B cell (primary cell): ENCODE measurements at regions of chr22 and their contacts with region 1.

Region 1: GRCh38 chr22:46762238-46763050 is at the start of gene TBC1D22A:
- DNase-seq: peak; percentile 95
- ATAC-seq: peak; percentile 70
- H3K4me3 ChIP-seq: peak within 1 kb of the TSS; percentile 51 to 96 (median 89)
- H3K4me3 Mint-ChIP-seq: peak within 1 kb of the TSS; percentile 96
- H3K27ac ChIP-seq: peak within 1 kb of the TSS; percentile 87 to 93
- H3K27ac Mint-ChIP-seq: peak within 1 kb of the TSS; percentile 99
- H3K4me1 ChIP-seq: peaks cover 48 to 62% of the 10 kb centered on the region in 2 donors
- H3K4me1 Mint-ChIP-seq: peaks cover 59% of the 10 kb centered on the region
- H3K27me3 ChIP-seq: no peaks in the 10 kb centered on the region
- H3K27me3 Mint-ChIP-seq: no peaks in the 10 kb centered on the region
- CTCF ChIP-seq: no peak
- total RNA-seq, gene TBC1D22A: 128 and 141 TPM in 2 replicates

Region 2: GRCh38 chr22:46681010-46681409 is 81.4 kb before region 1 on chr22:
- CTCF ChIA-PET with region 1: interaction called, 4 read pairs
- POLR2A ChIA-PET with region 1: no interaction called
- intact Hi-C with region 1: loop called (anchors 2 kb)
- DNase-seq: peak; percentile 50
- ATAC-seq: no peak
- H3K4me3 ChIP-seq: no peak overlapping the region
- H3K4me3 Mint-ChIP-seq: no peak overlapping the region
- H3K27ac ChIP-seq: no peak overlapping the region
- H3K27ac Mint-ChIP-seq: no peak overlapping the region
- H3K4me1 ChIP-seq: peaks cover 30 to 34% of the 10 kb centered on the region in 2 donors
- H3K4me1 Mint-ChIP-seq: peaks cover 29% of the 10 kb centered on the region
- H3K27me3 ChIP-seq: peaks cover 0 to 20% (median 0%) of the 10 kb centered on the region in 4 experiments
- H3K27me3 Mint-ChIP-seq: peaks cover 4% of the 10 kb centered on the region
- CTCF ChIP-seq: peak; percentile 47

Region 3: DNA sequence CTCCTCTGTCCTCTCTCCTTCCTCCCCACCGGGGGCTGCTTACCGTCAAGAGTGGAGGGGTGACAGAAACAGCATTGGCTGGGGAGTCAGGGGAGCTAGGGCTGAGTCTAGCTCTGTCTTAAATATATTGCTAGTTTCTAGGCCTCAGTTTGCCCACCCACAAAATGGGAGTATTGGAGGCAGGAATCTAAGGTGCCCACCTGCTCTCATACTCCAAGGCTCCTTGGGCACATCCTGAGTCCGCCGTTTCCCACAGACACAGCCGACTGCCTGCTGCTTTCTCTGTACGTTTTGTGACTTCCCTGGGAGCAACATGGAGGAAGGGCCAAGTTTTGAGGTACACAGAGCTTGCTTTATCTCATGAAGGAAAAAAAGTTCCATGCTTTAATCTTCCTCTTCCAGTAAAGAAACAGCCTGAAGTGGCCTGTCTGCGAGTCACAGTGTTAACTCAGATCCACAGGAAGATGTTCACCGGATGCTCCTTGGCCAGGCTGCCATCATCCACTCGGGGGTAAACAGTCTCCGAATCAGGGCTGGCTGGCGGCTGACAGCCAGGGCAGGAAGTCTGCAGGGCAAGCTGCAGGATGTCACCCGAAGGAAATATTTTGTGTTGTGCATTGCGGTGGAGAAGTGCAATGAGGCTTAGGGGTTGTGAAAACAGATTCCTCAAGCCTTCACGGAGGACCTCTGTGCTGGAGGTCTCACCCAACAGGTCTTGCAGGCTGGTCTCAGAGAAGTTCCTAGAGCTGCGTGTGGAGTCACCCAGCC is 13.4 kb before region 1 on chr22:
- CTCF ChIA-PET with region 1: interaction called, 19 read pairs
- POLR2A ChIA-PET with region 1: interaction called, 12 read pairs
- intact Hi-C with region 1: no loop called
- DNase-seq: peak; percentile 44
- ATAC-seq: peak; percentile 10
- H3K4me3 ChIP-seq: no peak overlapping the region
- H3K4me3 Mint-ChIP-seq: peak overlapping the region; percentile 45
- H3K27ac ChIP-seq: no peak overlapping the region
- H3K27ac Mint-ChIP-seq: peak overlapping the region; percentile 62
- H3K4me1 ChIP-seq: peaks cover 13 to 34% of the 10 kb centered on the region in 2 donors
- H3K4me1 Mint-ChIP-seq: peaks cover 17% of the 10 kb centered on the region
- H3K27me3 ChIP-seq: peaks cover 0 to 6% (median 0%) of the 10 kb centered on the region in 4 experiments
- H3K27me3 Mint-ChIP-seq: peaks cover 8% of the 10 kb centered on the region
- CTCF ChIP-seq: no peak

Region 4: DNA sequence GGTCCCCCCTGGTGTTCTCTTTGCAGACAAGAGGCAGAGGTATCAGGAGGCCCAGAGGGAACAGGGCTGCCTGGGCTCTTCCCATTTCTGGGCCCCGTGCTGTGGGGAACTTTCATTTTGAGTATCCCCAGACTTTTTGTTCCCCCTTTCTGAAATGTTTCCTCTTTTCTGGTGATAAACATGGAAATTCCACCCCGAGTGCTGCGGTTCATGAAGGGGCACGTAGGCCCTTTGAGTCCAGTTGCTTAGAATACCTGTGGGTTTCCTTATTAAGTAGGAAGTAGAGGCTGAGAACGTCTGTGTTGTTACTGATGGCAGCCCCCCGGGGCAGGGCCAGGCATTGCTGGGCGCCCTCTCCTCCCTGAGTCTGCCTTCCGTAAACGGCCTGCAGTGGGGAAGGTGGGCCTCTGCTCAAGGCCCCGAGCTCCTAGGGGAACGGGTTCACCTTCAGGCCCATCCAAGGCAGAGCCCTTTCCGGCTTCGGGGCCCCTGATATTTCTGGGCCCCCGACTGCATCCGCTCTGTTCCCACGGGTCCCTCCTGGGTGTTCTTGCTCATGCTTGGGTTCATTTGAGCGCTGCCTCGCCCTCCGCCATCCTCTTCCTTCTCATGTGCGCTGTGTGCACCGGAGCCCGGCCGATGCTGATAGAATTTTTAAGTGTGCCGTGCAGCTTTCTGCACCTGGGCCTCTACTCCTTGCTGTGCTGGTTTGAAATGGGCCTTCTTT is 12.0 kb after region 1 on chr22:
- CTCF ChIA-PET with region 1: interaction called, 51 read pairs
- POLR2A ChIA-PET with region 1: interaction called, 92 read pairs
- intact Hi-C with region 1: loop called (anchors 1 kb)
- DNase-seq: peak; percentile 84
- ATAC-seq: peak; percentile 64
- H3K4me3 ChIP-seq: peak overlapping the region; percentile 21 to 49 (median 37)
- H3K4me3 Mint-ChIP-seq: peak overlapping the region; percentile 79
- H3K27ac ChIP-seq: peak overlapping the region; percentile 87 to 91
- H3K27ac Mint-ChIP-seq: peak overlapping the region; percentile 93
- H3K4me1 ChIP-seq: peaks cover 93% of the 10 kb centered on the region in 2 donors
- H3K4me1 Mint-ChIP-seq: peaks cover 89% of the 10 kb centered on the region
- H3K27me3 ChIP-seq: no peaks in the 10 kb centered on the region
- H3K27me3 Mint-ChIP-seq: no peaks in the 10 kb centered on the region
- CTCF ChIP-seq: no peak

Region 5: DNA sequence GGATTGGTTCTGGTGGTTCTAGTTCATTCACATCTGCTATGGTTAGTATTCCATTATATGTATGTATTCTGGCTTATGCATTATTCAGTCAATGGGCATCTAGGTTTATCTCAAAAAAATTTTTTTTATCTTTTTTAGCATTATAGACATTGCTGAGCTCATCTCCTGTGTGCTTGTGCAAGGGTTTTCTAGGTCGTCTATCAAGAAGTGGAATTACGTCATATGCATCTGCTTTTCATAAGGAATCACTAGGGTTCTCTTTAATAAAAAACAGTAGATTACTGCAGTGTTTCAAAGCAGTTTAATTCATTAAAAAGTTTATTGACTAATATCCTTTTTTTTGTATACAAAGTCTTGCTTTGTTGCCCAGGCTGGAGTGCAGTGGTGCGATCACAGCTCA is 21.3 kb after region 1 on chr22:
- CTCF ChIA-PET with region 1: interaction called, 26 read pairs
- POLR2A ChIA-PET with region 1: no interaction called
- intact Hi-C with region 1: no loop called
- DNase-seq: no peak
- ATAC-seq: no peak
- H3K4me3 ChIP-seq: no peak overlapping the region
- H3K4me3 Mint-ChIP-seq: no peak overlapping the region
- H3K27ac ChIP-seq: no peak overlapping the region
- H3K27ac Mint-ChIP-seq: no peak overlapping the region
- H3K4me1 ChIP-seq: peaks cover 49 to 50% of the 10 kb centered on the region in 2 donors
- H3K4me1 Mint-ChIP-seq: peaks cover 83% of the 10 kb centered on the region
- H3K27me3 ChIP-seq: no peaks in the 10 kb centered on the region
- H3K27me3 Mint-ChIP-seq: no peaks in the 10 kb centered on the region
- CTCF ChIP-seq: no peak

Region 6: GRCh38 chr22:46791201-46791731 is 28.8 kb after region 1 on chr22:
- CTCF ChIA-PET with region 1: interaction called, 27 read pairs
- POLR2A ChIA-PET with region 1: interaction called, 19 read pairs
- intact Hi-C with region 1: loop called (anchors 1 kb)
- DNase-seq: peak; percentile 70
- ATAC-seq: peak; percentile 95
- H3K4me3 ChIP-seq: peak overlapping the region in 2 of 5 experiments; percentile 3 to 37
- H3K4me3 Mint-ChIP-seq: peak overlapping the region; percentile 85
- H3K27ac ChIP-seq: peak overlapping the region; percentile 51 to 75
- H3K27ac Mint-ChIP-seq: peak overlapping the region; percentile 95
- H3K4me1 ChIP-seq: peaks cover 33 to 41% of the 10 kb centered on the region in 2 donors
- H3K4me1 Mint-ChIP-seq: peaks cover 51% of the 10 kb centered on the region
- H3K27me3 ChIP-seq: no peaks in the 10 kb centered on the region
- H3K27me3 Mint-ChIP-seq: no peaks in the 10 kb centered on the region
- CTCF ChIP-seq: no peak

Region 7: DNA sequence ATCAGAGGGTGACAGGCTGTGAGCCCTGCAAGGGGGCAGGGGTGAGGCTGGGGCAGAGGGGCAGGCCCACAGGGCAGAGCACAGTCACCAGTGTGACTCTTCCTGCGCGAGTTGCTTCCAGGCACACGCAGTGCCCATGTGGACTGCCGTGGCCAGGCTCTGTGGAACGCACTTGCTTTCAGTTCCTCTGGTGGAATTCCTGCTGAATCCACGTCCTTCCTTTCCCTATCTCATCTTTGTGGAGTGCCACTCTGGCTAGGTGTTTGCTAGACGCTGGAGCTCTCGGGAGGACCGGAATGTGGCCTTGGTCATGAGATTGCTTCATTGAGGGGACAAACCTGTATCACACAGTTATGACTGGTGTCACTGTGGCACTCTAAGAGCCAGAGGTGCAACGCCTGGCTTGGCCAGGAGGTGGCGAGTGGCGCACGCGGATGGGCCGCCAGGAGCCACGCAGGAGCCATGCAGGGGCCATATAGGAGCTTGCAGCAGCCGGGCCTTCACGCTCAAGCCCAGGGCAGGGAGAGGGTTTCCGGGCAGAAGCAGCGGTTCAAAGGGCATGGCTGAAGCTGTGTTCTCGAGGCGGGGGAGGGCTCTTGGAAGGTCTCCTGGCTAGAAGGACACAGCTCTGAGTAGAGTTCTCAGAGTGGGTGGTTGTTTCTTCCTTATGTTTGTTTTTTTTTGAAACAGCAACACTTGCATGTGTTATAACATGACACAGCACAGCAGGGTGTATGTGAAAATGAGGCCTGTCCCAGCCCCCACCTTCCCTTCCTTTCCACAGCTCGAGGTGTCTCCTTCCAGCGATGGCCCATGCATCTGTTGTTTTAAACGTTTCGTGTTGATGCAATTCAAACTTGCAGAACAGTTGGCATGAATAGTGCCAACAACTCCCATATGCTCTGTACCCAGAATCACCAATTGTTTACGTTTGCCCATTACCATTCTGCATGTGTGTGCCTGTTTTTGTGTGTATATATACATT is 36.2 kb after region 1 on chr22:
- CTCF ChIA-PET with region 1: interaction called, 468 read pairs
- POLR2A ChIA-PET with region 1: interaction called, 15 read pairs
- intact Hi-C with region 1: loop called (anchors 1 kb)
- DNase-seq: peak; percentile 74
- ATAC-seq: peak; percentile 78
- H3K4me3 ChIP-seq: no peak overlapping the region
- H3K4me3 Mint-ChIP-seq: no peak overlapping the region
- H3K27ac ChIP-seq: peak overlapping the region in 1 of 2 donors; percentile 9
- H3K27ac Mint-ChIP-seq: peak overlapping the region; percentile 83
- H3K4me1 ChIP-seq: peaks cover 7 to 8% of the 10 kb centered on the region in 2 donors
- H3K4me1 Mint-ChIP-seq: peaks cover 47% of the 10 kb centered on the region
- H3K27me3 ChIP-seq: no peaks in the 10 kb centered on the region
- H3K27me3 Mint-ChIP-seq: no peaks in the 10 kb centered on the region
- CTCF ChIP-seq: peak; percentile 79